ENCODE measurements at regions of chr2 and their contacts with region 1.

Region 1: DNA sequence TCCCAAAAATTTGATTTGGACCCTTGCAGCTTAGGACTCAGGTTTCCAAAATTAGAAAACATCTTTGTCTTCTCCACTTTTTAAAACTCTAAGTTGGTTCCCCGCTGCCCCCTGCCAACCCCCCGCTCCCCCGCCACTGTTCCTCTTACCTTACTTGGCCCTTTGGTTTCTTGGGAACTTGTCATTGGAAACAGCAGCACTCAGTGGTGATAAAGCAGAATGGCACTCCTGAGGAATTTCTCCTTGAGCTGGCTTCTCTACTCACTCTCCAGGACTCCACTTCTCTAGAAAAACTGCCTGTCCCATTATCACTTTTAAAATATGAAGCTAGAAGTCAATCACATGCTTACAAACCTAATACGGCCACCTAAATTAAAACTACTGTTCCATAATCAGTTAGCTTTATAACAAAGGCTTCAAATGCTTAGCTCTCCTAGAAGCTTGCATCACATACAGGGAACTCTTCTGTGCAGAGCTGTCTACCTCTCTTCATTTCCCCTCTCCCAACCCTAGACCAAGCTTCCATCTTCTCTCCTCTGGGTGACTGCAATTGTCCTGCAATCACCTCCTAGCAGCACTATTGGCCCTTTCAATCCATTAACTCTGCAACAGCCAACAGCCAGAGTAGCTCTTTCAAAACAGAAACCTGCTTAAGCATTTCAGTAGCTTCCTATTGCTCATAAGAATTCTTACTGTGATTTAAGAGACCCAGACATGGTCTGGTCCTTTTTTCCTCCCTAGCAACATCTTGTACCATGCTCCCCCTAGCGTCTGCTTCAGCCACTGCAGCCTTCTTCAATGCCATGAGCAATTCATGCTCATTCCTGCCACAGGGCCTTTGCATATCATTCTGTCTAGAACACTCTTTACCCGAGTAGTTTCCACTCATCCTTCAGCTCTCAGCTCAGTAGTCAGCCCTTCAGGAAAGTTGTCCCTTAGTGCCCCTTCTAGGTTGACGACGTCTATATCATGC is 15.2 kb upstream of the PLEKHM3 start:
- DNase-seq: peak; percentile 78
- ATAC-seq: peak; percentile 87
- H3K4me3 Mint-ChIP-seq: no peak overlapping the region
- H3K27ac Mint-ChIP-seq: peak overlapping the region; percentile 78
- H3K4me1 Mint-ChIP-seq: peaks cover 29% of the 10 kb centered on the region
- H3K27me3 Mint-ChIP-seq: no peaks in the 10 kb centered on the region
- CTCF ChIP-seq: peak; percentile 82

Region 2: DNA sequence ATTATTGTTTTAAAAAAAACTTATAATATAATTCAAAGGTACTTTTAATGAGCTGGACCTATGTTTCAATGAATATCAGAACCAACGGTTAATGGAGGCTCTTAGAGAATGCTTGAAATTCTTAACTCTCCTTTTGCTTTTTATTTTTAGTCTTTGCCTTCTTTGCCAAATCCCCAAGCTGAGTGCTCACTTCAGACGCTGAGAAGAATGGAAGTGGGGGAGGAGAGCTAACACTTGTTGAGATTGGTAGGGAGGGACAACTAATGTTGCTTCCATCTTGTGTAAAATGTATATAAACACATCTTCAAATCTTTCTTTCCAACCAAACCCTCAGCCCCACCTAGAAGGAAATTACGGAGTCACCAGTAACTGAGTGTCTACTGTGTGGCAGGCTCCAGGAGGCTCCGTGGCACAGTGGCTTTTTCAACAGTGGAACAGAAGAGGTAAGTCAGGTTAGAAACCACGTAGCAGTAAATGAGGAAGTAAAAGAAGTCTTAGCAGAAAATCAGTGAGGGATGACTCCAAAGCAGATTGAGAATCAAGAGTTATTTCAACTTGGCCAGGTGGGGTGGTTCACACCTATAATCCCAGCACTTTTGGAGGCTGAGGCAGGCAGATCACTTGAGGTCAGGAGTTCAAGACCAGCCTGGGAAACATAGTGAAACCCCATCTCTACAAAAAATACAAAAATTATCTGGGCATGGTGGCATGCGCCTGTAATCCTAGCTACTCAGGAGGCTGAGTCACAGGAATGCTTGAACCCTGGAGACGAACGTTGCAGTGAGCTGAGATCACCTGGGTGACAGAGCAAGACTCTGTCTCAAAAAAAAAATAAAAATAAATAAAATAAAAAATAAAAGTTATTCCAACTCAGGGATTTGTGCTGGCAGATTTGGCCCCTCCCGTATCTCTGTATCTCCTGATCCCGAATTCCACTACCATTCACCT is 555.8 kb before region 1 on chr2:
- CTCF ChIA-PET with region 1: no interaction called
- POLR2A ChIA-PET with region 1: no interaction called
- DNase-seq: no peak
- ATAC-seq: no peak
- H3K4me3 Mint-ChIP-seq: no peak overlapping the region
- H3K27ac Mint-ChIP-seq: no peak overlapping the region
- H3K4me1 Mint-ChIP-seq: peaks cover 9% of the 10 kb centered on the region
- H3K27me3 Mint-ChIP-seq: no peaks in the 10 kb centered on the region
- CTCF ChIP-seq: no peak

Region 3: DNA sequence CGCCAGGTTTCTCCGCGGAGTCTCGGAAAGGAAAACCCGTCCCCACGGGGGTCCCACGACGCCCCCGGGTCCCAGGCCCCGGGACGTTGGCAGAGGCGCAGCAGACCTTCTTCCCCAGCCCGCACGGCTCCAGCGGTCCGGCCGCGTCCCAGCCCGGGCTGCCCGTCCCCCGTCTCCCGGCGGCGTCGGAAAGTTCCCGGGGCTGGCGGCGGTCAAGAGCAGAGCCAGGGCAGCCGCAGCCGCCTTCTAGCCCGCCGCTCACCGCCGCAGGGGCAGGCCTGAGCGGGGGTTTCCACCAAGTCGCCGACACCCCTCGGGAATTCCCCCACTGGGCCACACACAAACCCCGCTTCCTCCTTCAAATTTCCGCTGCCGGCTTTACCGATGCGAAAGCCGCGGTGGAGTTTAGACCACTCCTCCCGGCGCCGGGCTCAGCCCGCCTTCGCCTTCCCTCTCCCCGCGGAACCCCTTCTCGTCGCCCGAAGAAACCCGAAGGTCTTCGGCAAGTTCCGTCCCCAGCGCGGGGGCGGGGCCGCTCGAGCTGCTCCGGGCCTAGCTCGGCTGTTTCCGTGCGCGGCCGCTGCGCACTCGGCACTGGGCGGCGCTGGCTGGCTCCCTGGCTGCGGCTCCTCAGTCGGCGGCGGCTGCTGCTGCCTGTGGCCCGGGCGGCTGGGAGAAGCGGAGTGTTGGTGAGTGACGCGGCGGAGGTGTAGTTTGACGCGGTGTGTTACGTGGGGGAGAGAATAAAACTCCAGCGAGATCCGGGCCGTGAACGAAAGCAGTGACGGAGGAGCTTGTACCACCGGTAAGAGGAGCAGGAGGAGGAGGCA is 510.9 kb before region 1 on chr2 and contains the start of gene CREB1:
- CTCF ChIA-PET with region 1: no interaction called
- POLR2A ChIA-PET with region 1: no interaction called
- DNase-seq: peak; percentile 99
- ATAC-seq: peak; percentile 94
- H3K4me3 Mint-ChIP-seq: peak within 1 kb of the TSS; percentile 98
- H3K27ac Mint-ChIP-seq: peak within 1 kb of the TSS; percentile 100
- H3K4me1 Mint-ChIP-seq: peaks cover 43% of the 10 kb centered on the region
- H3K27me3 Mint-ChIP-seq: peaks cover 13% of the 10 kb centered on the region
- CTCF ChIP-seq: no peak
- total RNA-seq, gene CREB1: 80.7 to 97.7 TPM (median 85.0 TPM) in 3 replicates

Region 4: GRCh38 chr2:207692206-207693065 is 348.0 kb before region 1 on chr2:
- CTCF ChIA-PET with region 1: interaction called, 14 read pairs
- POLR2A ChIA-PET with region 1: no interaction called
- DNase-seq: peak; percentile 55
- ATAC-seq: peak; percentile 95
- H3K4me3 Mint-ChIP-seq: no peak overlapping the region
- H3K27ac Mint-ChIP-seq: no peak overlapping the region
- H3K4me1 Mint-ChIP-seq: 0 out of 2 replicates have a peak, but pooled peaks cover 3% of the 10 kb centered on the region
- H3K27me3 Mint-ChIP-seq: no peaks in the 10 kb centered on the region
- CTCF ChIP-seq: peak; percentile 39; the same call in 1 of the 2 replicates

Region 5: DNA sequence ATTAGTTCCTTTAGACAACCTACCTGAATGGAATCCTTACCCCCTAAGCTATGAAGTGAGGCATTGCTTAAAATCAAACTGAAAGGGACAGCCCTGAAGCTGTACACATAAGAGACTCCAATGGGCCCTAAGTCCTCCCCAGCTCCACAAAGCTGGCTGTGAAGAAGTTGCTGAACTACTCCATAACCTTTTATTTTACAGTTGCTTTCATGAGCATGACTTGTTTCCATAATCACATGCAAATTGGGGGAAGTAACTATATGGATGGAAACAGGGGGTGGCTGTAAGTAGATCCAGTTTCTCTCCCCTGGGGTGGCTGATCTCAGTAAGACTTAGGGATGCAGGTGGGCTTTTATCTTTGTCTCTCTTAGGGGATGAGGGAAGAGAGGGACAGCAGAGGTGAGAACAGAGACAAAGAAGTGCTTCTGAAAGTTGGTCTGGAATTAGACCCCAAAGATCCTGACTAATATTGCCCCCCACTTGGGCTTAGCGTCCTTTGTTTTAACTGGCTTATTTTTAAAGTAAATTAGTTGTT is 276.3 kb before region 1 on chr2:
- CTCF ChIA-PET with region 1: interaction called, 95 read pairs
- POLR2A ChIA-PET with region 1: interaction called, 5 read pairs
- DNase-seq: no peak
- ATAC-seq: no peak
- H3K4me3 Mint-ChIP-seq: peak overlapping the region; percentile 62
- H3K27ac Mint-ChIP-seq: peak overlapping the region; percentile 9
- H3K4me1 Mint-ChIP-seq: peaks cover 75% of the 10 kb centered on the region
- H3K27me3 Mint-ChIP-seq: no peaks in the 10 kb centered on the region
- CTCF ChIP-seq: no peak

Region 6: DNA sequence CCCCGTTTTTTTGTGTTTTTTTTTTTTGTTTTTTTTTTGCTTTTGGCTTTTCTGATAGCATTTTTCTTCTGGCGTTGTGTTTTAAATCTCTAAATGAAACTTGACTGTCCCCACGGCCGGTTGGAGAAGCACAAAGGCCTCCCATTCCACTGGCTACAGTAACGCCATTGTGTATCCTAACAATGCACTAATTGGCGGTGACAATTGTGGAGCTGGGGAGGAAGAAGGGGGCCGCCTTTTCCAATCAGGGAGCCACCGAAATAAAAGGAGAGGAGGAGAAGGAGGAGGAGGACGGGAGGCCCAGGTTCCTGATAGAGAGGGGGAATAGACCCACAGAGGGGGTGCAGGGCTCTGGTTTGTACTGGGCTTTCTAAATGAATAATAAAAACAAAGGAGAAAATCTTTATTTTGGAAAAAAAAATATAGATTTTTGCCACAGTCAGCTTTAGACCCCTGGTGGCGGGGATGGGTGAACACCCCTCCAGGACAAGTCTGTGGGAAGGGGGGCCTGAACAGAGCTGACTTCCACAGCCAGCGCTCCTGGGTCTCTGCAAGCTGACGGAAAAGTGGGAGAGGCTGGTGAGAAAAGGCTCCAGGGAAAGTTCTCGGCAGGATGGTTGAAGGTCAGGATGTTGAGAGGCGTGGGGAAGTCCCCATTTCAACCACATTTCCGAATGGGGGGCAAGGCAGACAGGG is 227.1 kb before region 1 on chr2:
- CTCF ChIA-PET with region 1: interaction called, 14 read pairs
- POLR2A ChIA-PET with region 1: no interaction called
- DNase-seq: peak; percentile 23
- ATAC-seq: peak; percentile 3; the same call in 1 of the 2 replicates
- H3K4me3 Mint-ChIP-seq: peak overlapping the region; percentile 42
- H3K27ac Mint-ChIP-seq: peak overlapping the region; percentile 93
- H3K4me1 Mint-ChIP-seq: peaks cover 62% of the 10 kb centered on the region
- H3K27me3 Mint-ChIP-seq: no peaks in the 10 kb centered on the region
- CTCF ChIP-seq: no peak

Region 7: GRCh38 chr2:207939342-207940108 is 101.0 kb before region 1 on chr2:
- CTCF ChIA-PET with region 1: interaction called, 12 read pairs
- POLR2A ChIA-PET with region 1: no interaction called
- DNase-seq: no peak
- ATAC-seq: no peak
- H3K4me3 Mint-ChIP-seq: no peak overlapping the region
- H3K27ac Mint-ChIP-seq: no peak overlapping the region
- H3K4me1 Mint-ChIP-seq: peaks cover 18% of the 10 kb centered on the region
- H3K27me3 Mint-ChIP-seq: no peaks in the 10 kb centered on the region
- CTCF ChIP-seq: no peak

Region 8: GRCh38 chr2:208006833-208007232 is 33.7 kb before region 1 on chr2:
- CTCF ChIA-PET with region 1: interaction called, 10 read pairs
- POLR2A ChIA-PET with region 1: no interaction called
- DNase-seq: no peak
- ATAC-seq: no peak
- H3K4me3 Mint-ChIP-seq: no peak overlapping the region
- H3K27ac Mint-ChIP-seq: no peak overlapping the region
- H3K4me1 Mint-ChIP-seq: peaks cover 20% of the 10 kb centered on the region
- H3K27me3 Mint-ChIP-seq: no peaks in the 10 kb centered on the region
- CTCF ChIP-seq: no peak